ENCODE measurements at regions of chr6 and their contacts with region 1.

Region 1: DNA sequence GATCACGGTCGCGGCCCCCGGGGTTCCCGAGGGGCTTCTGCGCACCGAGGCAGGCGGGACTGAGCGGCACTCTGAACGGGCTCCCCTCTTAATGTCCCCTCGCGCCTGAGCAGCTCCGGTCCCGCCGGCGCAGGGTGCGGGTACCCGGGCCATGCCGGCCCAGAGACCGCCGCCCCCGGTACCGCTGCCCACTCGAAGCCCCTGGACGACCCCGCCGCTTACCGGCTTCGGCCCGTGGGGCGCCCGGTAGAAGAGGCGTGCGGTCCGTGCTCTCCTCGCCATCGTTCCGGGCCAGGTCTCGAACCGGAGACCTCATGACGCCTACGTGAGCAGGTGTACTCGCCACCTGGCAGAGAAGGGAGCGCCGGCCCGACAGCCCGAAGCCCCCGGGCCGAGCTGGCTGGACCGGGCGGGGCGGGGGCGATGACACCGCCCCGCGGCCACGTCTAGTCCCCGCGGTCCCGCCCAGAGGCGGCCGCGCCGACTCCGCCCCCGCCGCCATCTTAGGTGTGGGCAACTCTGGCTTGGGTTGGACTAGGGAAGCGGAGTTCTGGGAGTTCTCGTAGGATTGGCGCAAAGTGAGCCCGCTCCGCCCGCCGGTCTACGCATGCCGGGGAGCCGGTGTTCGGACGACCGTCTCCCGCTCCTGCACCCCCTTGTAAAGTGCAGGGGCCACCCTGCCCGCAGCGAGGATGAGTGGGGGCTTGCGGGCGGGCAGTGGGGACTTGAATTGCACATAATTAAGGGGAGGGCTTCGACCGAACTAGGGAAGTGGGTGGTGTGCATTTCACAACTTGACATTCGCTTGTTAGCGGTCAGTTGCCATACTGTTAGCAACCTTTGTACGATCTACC is at the start of gene SLC17A5:
- DNase-seq: peak; percentile 82 to 92
- H3K4me3 ChIP-seq: peak within 1 kb of the TSS; percentile 77
- H3K27ac ChIP-seq: peak within 1 kb of the TSS; percentile 74
- H3K4me1 ChIP-seq: peaks cover 48% of the 10 kb centered on the region
- H3K27me3 ChIP-seq: no peaks in the 10 kb centered on the region
- CTCF ChIP-seq: no peak
- total RNA-seq, gene SLC17A5: 15.8 and 16.9 TPM in 2 replicates

Region 2: GRCh38 chr6:73388800-73389512 is 264.8 kb before region 1 on chr6:
- CTCF ChIA-PET with region 1: interaction called, 3 read pairs
- POLR2A ChIA-PET with region 1: interaction called, 3 read pairs
- intact Hi-C with region 1: loop called (anchors 5 kb)
- DNase-seq: peak; percentile 86 to 87
- H3K4me3 ChIP-seq: peak overlapping the region; percentile 58
- H3K27ac ChIP-seq: peak overlapping the region; percentile 78
- H3K4me1 ChIP-seq: peaks cover 31% of the 10 kb centered on the region
- H3K27me3 ChIP-seq: no peaks in the 10 kb centered on the region
- CTCF ChIP-seq: peak; percentile 77

Region 3: GRCh38 chr6:73515204-73515655 is 138.6 kb before region 1 on chr6:
- CTCF ChIA-PET with region 1: no interaction called
- POLR2A ChIA-PET with region 1: interaction called, 7 read pairs
- intact Hi-C with region 1: loop called (anchors 1 kb)
- DNase-seq: peak in 1 of 2 experiments; percentile 36
- H3K4me3 ChIP-seq: no peak overlapping the region
- H3K27ac ChIP-seq: peak overlapping the region; percentile 76
- H3K4me1 ChIP-seq: peaks cover 15% of the 10 kb centered on the region; the same call in 1 of the 2 replicates
- H3K27me3 ChIP-seq: no peaks in the 10 kb centered on the region
- CTCF ChIP-seq: no peak

Region 4: DNA sequence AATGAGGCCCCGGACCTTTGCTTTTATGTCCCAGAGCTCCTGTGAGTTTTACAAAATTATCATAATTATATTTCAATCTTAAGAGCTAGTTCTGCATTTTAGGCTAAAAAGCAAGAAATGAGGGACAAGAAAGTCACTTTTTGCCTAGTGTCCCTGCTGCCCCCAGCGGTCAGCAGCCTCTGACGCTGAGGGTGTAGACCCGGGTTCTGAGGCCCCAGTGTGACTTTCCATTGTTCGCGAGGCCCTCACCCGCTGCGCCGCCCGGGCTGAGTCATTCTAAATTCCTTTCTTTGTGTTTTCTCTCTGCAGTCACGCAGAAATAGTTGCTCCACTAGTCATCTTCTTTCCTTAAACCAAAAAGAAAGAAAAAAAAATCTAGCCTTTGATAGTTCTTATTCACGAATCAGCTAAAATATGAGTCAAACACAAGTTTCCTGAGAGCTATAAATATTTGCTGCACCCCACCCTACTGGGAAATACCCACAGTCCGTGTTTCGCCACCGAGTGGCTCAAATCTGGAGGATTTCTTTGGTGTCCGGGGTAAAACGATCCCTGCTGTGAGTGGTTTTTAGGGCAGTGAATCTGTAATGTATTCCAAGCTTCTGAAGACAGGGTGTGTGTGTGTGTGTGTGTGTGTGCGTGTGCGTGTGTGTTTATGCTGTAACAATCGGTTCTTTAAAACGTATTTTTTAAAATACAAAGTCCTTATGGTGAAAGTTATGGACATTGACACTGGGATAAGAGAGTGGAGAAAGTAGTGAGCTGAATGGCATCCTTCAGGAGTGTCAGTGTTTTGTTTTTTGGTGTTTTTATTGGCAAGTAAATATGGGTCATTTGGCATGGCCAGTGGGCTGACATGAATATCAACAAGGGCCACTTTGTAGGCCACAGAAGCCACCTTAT is 73.3 kb before region 1 on chr6:
- CTCF ChIA-PET with region 1: interaction called, 3 read pairs
- POLR2A ChIA-PET with region 1: no interaction called
- intact Hi-C with region 1: loop called (anchors 1 kb)
- DNase-seq: peak; percentile 97
- H3K4me3 ChIP-seq: peak overlapping the region; percentile 60
- H3K27ac ChIP-seq: peak overlapping the region; percentile 99
- H3K4me1 ChIP-seq: peaks cover 61% of the 10 kb centered on the region
- H3K27me3 ChIP-seq: no peaks in the 10 kb centered on the region
- CTCF ChIP-seq: peak; percentile 56; the same call in 1 of the 2 replicates

Region 5: DNA sequence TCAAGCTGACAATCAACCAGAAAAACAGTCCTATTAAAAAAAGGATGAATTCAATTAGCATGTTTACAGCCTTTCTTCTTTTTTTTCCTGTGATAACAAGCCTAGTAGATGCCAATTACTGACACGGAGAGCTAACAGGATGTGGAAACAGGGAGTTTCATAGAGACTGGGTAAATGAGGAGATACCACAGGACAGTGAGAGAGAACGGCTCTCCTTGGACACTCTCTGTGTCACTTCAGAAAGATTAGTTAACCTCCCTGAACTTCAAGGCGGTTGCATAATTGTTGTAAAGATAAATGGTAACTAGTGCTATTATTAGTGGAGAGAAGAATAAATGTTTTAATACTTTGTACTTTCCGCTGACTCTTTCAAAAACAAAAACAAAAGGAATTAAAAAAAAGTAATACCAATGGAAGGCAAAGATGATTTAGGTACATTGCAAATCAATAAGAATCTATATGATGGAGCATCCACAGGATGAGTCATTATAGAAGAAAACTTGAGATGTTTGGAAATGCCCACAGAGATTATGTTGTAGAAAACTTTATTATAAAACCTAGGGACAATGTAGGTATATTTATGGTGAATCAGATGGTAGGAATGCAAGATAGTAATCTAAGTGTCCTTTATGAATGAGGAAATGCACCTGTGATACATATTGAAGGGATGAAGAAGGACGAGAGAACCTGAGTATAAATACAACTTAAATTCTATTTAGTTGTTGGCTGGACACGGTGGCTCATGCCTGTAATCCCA is 14.6 kb before region 1 on chr6:
- CTCF ChIA-PET with region 1: interaction called, 4 read pairs
- POLR2A ChIA-PET with region 1: interaction called, 3 read pairs
- intact Hi-C with region 1: loop called (anchors 1 kb)
- DNase-seq: peak in 1 of 2 experiments; percentile 97
- H3K4me3 ChIP-seq: no peak overlapping the region
- H3K27ac ChIP-seq: peak overlapping the region; percentile 76
- H3K4me1 ChIP-seq: peaks cover 58% of the 10 kb centered on the region
- H3K27me3 ChIP-seq: no peaks in the 10 kb centered on the region
- CTCF ChIP-seq: no peak

Region 6: DNA sequence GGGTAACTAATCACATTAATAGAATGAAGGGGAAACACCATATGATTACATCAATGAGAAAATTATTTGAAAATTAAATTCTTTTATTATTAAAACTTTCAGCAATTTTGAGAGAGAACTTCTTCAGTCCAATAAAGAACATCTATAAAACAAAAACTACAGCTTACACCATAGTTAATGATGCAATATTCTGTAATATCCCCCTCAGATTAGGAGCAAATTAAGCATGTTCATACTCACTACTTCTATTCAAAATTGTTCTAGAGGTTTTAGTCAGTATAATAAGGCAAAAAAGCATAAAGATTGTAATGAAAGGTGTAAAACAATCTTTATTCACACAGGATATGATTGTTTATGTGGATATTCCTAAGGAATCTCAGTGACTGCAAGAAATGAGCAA is 507.6 kb after region 1 on chr6:
- CTCF ChIA-PET with region 1: no interaction called
- POLR2A ChIA-PET with region 1: interaction called, 11 read pairs
- intact Hi-C with region 1: no loop called
- DNase-seq: no peak
- H3K4me3 ChIP-seq: no peak overlapping the region
- H3K27ac ChIP-seq: no peak overlapping the region
- H3K4me1 ChIP-seq: no peaks in the 10 kb centered on the region
- H3K27me3 ChIP-seq: no peaks in the 10 kb centered on the region
- CTCF ChIP-seq: no peak

Region 7: DNA sequence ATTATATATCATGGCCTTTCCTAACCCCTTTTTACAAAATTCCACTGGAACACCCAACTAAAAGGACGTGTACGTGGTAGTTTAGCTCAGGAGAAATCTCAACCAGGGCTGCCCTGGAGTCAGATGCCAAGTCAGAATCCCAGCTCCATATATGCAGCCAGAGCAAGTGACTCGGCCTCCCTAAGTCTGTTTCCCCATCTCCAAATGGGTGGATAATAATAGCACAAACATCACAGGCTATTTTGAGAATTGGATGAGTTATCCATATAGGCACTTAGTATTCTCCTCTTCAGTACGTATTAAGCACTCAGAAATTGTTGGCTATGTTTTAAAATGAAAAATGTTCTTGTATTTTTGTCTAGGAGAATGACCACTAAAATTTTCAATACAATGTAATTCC is 523.7 kb after region 1 on chr6:
- CTCF ChIA-PET with region 1: no interaction called
- POLR2A ChIA-PET with region 1: no interaction called
- intact Hi-C with region 1: no loop called
- DNase-seq: no peak
- H3K4me3 ChIP-seq: no peak overlapping the region
- H3K27ac ChIP-seq: no peak overlapping the region
- H3K4me1 ChIP-seq: no peaks in the 10 kb centered on the region
- H3K27me3 ChIP-seq: no peaks in the 10 kb centered on the region
- CTCF ChIP-seq: no peak

Region 8: DNA sequence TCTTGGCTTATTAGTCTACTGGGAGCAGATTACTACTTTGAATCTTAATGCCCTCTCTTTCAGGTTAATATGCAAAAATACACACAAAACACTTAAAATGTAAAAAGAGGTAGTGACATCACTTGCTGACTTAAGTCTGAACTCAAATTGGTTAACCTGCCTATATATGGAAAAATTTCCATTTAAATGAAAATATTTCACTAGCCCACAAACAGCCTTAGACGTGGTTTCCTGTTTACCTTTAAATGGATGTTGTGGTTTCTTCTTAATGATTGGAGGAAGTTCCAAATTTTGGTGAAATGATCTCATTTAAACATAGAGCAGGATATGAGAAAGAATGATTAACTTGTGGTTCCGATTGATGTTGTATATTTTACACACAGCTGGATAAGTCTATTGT is 595.9 kb after region 1 on chr6:
- CTCF ChIA-PET with region 1: no interaction called
- POLR2A ChIA-PET with region 1: no interaction called
- intact Hi-C with region 1: no loop called
- DNase-seq: no peak
- H3K4me3 ChIP-seq: no peak overlapping the region
- H3K27ac ChIP-seq: no peak overlapping the region
- H3K4me1 ChIP-seq: no peaks in the 10 kb centered on the region
- H3K27me3 ChIP-seq: no peaks in the 10 kb centered on the region
- CTCF ChIP-seq: no peak

Measured in PC-9 (cell line).